ENCODE measurements at regions of chr2 and their contacts with region 1.

Region 1: DNA sequence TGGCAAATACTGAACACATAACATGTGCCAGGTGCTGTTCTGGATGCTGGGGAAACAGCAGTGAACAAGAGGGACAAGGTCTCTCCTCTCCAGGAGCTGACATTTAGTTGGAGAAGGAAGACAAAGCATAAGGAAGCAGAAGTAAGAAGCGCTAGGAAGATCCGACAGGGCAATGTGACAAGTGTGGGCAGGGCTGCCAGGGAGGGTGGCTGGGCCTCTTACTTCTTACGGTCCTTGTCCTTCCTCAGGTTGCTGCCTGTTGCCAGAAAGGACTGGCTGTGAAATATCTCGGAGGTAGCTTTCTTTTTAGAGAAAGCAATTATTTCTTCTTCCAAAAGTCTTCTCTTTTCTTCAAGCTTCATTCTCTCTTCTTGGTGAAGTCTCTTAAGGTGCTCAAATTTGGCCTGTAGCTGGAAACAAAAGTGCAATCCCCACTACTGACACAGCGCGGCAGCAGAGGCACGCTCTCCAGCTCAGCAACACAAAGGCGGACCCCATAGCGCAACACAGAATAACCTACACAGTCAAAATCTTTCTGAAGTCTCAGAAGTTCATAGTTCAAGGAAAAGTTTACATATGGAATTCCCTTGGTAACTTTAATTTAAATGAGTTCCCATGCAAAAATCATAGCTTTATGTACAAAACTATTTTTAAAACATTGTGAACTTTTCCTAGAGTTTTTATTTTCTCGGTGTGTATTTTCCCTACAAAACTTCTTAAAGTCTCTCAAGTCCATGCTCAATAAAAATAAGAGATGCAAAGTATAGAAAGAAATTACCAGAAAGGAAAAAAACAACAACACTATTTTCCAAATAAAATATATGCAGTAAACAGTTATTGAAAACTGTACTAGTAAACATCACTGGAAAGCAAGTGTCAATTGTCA is 67.7 kb downstream of the SEPTIN10 start:
- DNase-seq: peak; percentile 78
- ATAC-seq: peak; percentile 90

Region 2: GRCh38 chr2:109322111-109322510 is 224.0 kb before region 1 on chr2:
- intact Hi-C with region 1: no loop called
- DNase-seq: peak; percentile 88
- ATAC-seq: peak; percentile 72

Region 3: GRCh38 chr2:109722026-109722425 is 176.0 kb after region 1 on chr2:
- intact Hi-C with region 1: loop called (anchors 5 kb)
- DNase-seq: peak; percentile 72
- ATAC-seq: peak; percentile 92